BJ (cell line): ENCODE measurements at regions of chr1 and their contacts with region 1.

Region 1: GRCh38 chr1:8987881-8988617 is 38.2 kb downstream of the SLC2A7 start:
- DNase-seq: no peak
- H3K4me3 ChIP-seq: no peak overlapping the region
- H3K27me3 ChIP-seq: no peaks in the 10 kb centered on the region
- CTCF ChIP-seq: peak; percentile 94

Region 2: DNA sequence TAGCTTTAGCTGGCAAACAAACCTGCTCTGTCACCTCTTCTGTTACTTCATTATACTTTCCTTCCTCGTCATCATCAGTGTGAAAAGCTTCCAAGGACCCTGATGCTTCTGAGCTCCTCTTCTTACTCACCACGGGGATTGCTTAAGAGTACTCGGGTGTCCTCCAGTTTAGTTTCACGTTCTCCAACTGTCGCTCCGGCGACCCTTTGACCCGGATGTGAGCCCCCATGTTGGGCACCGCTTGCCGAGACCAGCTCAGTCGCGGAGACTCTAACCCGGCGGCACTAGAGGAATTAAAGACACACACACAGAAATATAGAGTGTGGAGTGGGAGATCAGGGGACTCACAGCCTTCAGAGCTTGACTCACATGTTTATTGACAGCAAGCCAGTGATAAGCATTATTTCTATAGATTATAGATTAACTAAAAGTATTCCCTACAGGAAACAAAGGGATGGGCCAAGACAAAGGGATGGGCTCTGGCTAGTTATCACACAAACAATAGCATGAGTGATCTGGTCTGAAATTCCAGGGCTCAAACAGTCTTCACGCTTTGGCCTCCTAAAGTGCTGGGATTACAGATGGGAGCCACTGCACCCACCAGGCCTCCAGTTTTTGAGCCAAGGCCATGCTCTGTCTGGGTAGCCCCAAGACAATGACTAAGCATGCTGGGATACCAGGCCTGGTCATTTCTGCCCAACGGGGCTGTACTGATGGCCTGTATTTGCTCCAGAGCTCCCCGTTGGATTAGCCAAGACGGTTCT is 79.5 kb before region 1 on chr1:
- CTCF ChIA-PET with region 1: interaction called, 17 read pairs
- POLR2A ChIA-PET with region 1: no interaction called
- DNase-seq: no peak
- H3K4me3 ChIP-seq: no peak overlapping the region
- H3K27me3 ChIP-seq: no peaks in the 10 kb centered on the region
- CTCF ChIP-seq: no peak

Region 3: GRCh38 chr1:9004700-9005394 is 16.8 kb after region 1 on chr1:
- CTCF ChIA-PET with region 1: interaction called, 34 read pairs
- POLR2A ChIA-PET with region 1: interaction called, 3 read pairs
- DNase-seq: peak; percentile 40
- H3K4me3 ChIP-seq: no peak overlapping the region
- H3K27me3 ChIP-seq: no peaks in the 10 kb centered on the region; the same call in 1 of the 2 replicates
- CTCF ChIP-seq: peak; percentile 87